Sigmoid colon (tissue), 7 donors: ENCODE measurements at regions of chr12 and their contacts with region 1.

Region 1: GRCh38 chr12:76083904-76084862 is at the start of gene NAP1L1:
- DNase-seq: peak; percentile 99
- H3K4me3 ChIP-seq: peak within 1 kb of the TSS; percentile 77 to 90 (median 80)
- H3K27ac ChIP-seq: peak within 1 kb of the TSS; percentile 97 to 99 (median 98)
- H3K4me1 ChIP-seq: peaks cover 0 to 38% (median 34%) of the 10 kb centered on the region in 4 donors
- H3K27me3 ChIP-seq: no peaks in the 10 kb centered on the region
- CTCF ChIP-seq: peak in 1 of 4 experiments; percentile 4
- EP300 ChIP-seq: no peak
- POLR2A ChIP-seq: peak; percentile 70 to 85
- total RNA-seq, gene NAP1L1: 321 to 424 (median 333) TPM

Region 2: DNA sequence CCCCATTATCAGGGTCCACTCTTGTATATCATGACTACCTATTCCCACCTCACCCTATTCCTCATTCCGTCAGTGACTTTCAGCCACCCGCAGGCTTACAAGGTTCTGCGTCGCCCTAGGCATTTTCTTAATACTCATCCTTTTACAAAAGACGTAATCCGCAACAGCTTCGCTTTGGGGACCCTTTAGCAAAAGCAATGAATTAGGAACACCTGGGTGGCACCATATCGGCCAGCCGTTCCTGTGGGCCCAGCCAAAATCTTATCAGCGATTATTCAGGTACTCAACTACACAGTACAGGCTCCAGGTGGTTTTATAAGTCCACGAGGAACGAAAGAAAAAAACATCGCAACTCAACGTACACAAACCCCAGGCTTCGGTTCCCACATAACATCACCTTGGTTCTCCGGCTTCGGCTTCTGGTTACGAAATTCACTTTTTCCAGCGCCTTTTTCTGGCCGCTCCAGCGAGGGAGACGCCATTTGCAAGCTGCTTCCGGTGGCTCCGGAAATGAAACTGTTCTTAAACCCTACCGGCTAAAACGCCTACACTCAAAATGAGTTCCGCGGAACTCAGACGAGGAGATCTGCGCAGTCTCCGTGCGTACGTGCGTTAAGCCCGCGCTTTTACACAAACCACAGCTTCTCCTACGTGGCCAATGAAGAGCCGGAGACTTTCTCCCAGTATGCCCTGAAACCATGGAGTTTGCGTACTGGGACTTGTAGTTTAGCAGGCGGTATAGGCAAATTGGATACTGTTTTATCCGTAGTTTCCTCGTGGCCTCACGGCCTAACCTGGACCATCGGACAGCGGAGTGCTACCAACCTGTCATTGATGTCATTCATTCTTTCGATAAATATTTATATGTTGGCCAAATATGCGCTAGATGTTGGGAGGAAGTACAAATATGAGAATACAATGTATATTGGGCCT is 572.8 kb before region 1 on chr12 and contains the start of gene KRR1:
- intact Hi-C with region 1: loop called (anchors 1 kb)
- DNase-seq: peak; percentile 97
- H3K4me3 ChIP-seq: peak within 1 kb of the TSS; percentile 75 to 90 (median 84)
- H3K27ac ChIP-seq: peak within 1 kb of the TSS; percentile 77 to 81 (median 77)
- H3K4me1 ChIP-seq: peaks cover 0 to 21% (median 17%) of the 10 kb centered on the region in 4 donors
- H3K27me3 ChIP-seq: no peaks in the 10 kb centered on the region
- CTCF ChIP-seq: no peak
- EP300 ChIP-seq: no peak
- POLR2A ChIP-seq: peak in 1 of 2 donors; percentile 32
- total RNA-seq, gene KRR1: 12.7 to 40.0 (median 29.5) TPM

Region 3: DNA sequence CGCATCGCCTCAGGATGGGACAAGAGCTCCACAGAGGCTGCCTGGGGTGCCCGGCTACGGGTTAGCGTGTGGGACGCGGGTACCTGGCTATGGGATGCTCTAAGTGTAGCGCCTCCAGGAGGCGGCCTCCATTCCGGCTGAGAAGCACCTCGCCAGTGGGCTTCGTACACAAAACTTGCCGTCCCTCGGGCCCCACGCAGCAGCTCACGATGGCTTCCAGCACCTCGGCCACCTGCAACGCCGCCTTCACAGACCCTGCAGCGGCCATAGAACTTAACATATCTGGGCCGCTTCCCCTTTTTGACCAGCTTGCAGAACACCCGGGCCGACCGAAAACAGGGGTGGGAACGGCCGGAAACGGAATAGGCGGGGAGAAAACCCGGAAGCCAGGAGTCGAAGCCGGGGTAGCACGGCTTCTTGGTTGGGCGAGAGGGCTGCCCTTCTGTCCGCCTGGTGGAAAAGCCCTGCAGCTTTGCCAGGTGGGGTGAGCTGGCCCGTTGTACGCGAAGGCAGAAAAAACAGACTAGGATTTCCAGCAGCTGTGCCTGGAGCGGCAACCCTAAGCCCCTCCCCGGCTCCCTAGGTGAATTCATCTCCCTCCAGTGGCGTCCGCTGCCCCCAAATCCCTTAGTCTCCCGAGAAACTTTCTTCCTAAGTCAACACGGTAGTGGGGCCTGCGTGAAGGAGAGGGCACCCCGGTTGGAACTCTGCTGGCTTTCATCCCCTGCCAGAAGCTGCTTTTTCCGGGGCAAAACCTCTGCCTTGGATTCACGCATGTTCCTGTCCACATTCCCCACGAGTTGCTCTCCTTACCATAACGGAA is 264.1 kb after region 1 on chr12 and contains the start of gene BBS10:
- intact Hi-C with region 1: loop called (anchors 2 kb)
- DNase-seq: peak; percentile 95
- H3K4me3 ChIP-seq: peak within 1 kb of the TSS; percentile 65 to 86 (median 82)
- H3K27ac ChIP-seq: peak within 1 kb of the TSS; percentile 87 to 90 (median 90)
- H3K4me1 ChIP-seq: peaks cover 0 to 20% (median 14%) of the 10 kb centered on the region in 4 donors
- H3K27me3 ChIP-seq: no peaks in the 10 kb centered on the region
- CTCF ChIP-seq: peak in 3 of 4 experiments; percentile 16 to 35 (median 29)
- EP300 ChIP-seq: no peak
- POLR2A ChIP-seq: peak in 1 of 2 donors; percentile 16
- total RNA-seq, gene BBS10: 6.1 to 15.0 (median 12.9) TPM

Region 4: DNA sequence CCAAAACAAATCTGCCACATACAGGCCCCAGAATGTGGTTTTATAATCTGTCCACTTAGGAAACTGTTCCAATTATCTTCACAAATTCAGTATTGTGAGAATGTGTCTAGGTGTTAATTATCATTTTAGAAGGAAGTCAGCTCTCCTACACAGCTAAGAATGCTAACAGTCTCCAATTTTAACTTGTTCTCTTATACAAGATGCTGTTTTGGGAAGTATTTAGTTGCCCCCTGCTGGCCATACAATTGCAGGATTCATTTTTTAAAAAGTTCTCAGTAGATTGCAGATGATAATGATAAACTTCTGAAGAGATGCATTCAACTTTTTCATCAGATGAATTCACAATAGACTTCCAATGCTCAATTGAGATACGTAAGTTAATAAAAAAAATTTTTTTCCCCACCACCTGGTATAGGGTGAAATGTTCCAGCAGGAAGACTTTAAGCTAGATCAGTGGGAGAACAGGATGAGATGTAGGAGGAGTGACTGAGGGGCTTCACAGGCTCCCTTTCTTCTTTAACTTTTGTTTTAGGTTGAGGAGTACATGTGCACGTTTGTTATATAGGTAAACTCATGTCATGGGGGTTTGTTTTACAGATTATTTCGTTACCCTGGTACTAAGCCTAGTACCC is 502.7 kb after region 1 on chr12:
- intact Hi-C with region 1: loop called (anchors 10 kb)
- DNase-seq: no peak
- H3K4me3 ChIP-seq: no peak overlapping the region
- H3K27ac ChIP-seq: no peak overlapping the region
- H3K4me1 ChIP-seq: no peaks in the 10 kb centered on the region
- H3K27me3 ChIP-seq: no peaks in the 10 kb centered on the region
- CTCF ChIP-seq: peak in 2 of 4 experiments; percentile 36 to 54
- EP300 ChIP-seq: no peak
- POLR2A ChIP-seq: no peak